Tibial artery (tissue), 4 donors: ENCODE measurements at regions of chr15 and their contacts with region 1.

Region 1: DNA sequence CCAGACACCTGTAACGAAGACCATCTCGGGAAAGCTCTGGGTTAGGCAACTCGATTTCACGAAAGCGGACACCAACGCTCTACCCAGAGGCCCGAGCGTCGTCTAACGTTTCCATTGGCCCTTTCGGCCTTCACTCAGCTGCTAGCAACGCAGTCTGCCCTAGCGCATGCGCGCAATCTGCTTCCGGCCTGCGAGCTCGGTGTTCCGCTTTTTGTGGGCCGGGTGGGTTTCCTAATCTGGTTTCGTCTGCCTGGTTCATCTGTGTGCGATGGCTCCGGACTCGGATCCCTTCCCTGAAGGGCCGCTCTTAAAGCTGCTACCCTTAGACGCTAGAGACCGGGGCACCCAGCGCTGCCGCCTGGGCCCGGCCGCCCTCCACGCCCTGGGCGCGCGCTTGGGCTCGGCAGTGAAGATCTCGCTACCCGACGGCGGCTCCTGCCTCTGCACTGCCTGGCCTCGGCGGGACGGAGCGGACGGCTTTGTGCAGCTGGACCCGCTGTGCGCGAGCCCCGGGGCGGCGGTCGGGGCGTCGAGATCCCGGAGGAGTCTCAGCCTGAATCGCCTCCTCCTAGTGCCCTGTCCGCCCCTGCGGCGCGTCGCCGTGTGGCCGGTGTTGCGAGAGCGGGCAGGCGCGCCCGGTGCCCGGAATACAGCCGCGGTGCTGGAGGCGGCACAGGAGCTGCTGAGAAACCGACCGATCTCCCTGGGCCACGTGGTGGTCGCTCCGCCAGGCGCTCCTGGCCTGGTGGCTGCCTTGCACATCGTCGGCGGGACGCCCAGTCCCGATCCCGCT is 24.0 kb upstream of the GATM start:
- DNase-seq: peak; percentile 93 to 98
- H3K4me3 ChIP-seq: peak overlapping the region; percentile 76 to 88
- H3K27ac ChIP-seq: peak overlapping the region; percentile 90 to 93
- H3K4me1 ChIP-seq: peaks cover 0 to 29% (median 15%) of the 10 kb centered on the region in 4 donors
- H3K27me3 ChIP-seq: no peaks in the 10 kb centered on the region
- CTCF ChIP-seq: peak in 1 of 2 experiments; percentile 18

Region 2: GRCh38 chr15:45166834-45167630 is 235.3 kb before region 1 on chr15:
- intact Hi-C with region 1: loop called (anchors 2 kb)
- DNase-seq: peak; percentile 89 to 92
- H3K4me3 ChIP-seq: peak overlapping the region; percentile 67 to 75
- H3K27ac ChIP-seq: peak overlapping the region; percentile 97
- H3K4me1 ChIP-seq: peaks cover 0 to 26% (median 14%) of the 10 kb centered on the region in 4 donors
- H3K27me3 ChIP-seq: no peaks in the 10 kb centered on the region
- CTCF ChIP-seq: peak; percentile 60 to 70

Region 3: DNA sequence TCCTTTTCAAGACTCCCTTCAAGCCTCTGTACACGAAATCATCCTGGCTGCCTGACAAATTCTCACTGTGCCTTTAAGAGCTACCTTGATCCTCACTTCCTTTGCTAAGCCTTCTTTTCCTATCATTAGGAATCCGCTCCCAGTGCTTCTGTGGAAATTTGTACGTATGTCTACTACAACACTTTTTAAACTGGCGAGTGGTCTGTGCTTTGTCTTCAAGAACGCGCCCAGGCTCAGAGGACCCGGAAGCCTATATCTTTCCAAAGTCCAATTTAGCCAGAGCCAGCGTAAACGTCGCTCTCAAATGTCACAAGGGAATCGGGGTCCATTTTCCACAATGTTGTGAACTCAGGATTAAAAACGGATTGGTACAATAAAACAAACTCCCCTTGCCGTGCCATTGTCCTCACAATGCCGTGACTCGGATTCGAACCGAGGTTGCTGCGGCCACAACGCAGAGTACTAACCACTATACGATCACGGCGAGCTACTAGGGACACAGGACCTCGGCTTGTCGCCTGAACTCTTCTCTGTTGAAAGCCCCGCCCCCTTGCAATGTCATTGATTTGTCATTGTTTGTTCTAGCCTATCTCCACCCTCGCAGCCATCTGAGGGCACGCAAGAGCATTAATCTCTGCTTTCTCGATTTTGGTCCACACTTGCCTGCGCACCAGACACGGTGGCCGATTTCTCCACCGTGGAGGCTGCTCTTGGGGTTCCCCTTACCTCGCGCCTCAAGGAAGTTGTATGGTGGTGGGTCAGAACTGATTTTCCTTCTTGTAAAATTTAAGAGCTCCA is 202.2 kb before region 1 on chr15:
- intact Hi-C with region 1: loop called (anchors 10 kb)
- DNase-seq: peak; percentile 98 to 99
- H3K4me3 ChIP-seq: peak overlapping the region; percentile 55 to 60
- H3K27ac ChIP-seq: peak overlapping the region; percentile 99
- H3K4me1 ChIP-seq: peaks cover 0 to 11% (median 0%) of the 10 kb centered on the region in 4 donors
- H3K27me3 ChIP-seq: no peaks in the 10 kb centered on the region
- CTCF ChIP-seq: no peak

Region 4: GRCh38 chr15:45279024-45279698 is 123.2 kb before region 1 on chr15:
- intact Hi-C with region 1: loop called (anchors 2 kb)
- DNase-seq: peak; percentile 95 to 99
- H3K4me3 ChIP-seq: peak overlapping the region; percentile 55 to 60
- H3K27ac ChIP-seq: peak overlapping the region; percentile 77 to 84
- H3K4me1 ChIP-seq: peaks cover 0 to 13% (median 8%) of the 10 kb centered on the region in 4 donors
- H3K27me3 ChIP-seq: no peaks in the 10 kb centered on the region
- CTCF ChIP-seq: no peak

Region 5: GRCh38 chr15:45307230-45307924 is 95.0 kb before region 1 on chr15:
- intact Hi-C with region 1: loop called (anchors 10 kb)
- DNase-seq: no peak
- H3K4me3 ChIP-seq: peak overlapping the region; percentile 26 to 39
- H3K27ac ChIP-seq: peak overlapping the region in 1 of 2 donors; percentile 44
- H3K4me1 ChIP-seq: peaks cover 0 to 10% (median 5%) of the 10 kb centered on the region in 4 donors
- H3K27me3 ChIP-seq: no peaks in the 10 kb centered on the region
- CTCF ChIP-seq: peak; percentile 60 to 66

Region 6: DNA sequence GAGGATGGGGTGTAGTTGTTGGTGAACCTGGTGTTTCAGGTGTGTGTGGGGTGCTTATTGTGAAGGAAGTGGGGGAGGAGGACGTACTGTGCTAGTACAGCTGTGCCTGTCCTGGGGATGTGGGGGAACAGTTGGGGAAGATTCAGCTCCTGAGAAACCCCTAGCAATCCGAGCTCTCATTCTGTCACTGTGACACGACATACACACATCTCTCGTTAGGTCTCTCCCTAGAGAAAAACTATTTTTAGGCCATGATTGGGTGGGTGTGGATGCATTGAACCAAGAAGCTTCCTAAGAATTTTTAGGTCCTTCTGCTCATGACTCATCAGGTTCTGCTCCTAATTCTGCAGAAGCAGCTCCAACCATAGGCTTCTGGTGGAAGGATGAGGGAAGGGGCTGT is 65.9 kb after region 1 on chr15:
- intact Hi-C with region 1: no loop called
- DNase-seq: no peak
- H3K4me3 ChIP-seq: no peak overlapping the region
- H3K27ac ChIP-seq: no peak overlapping the region
- H3K4me1 ChIP-seq: no peaks in the 10 kb centered on the region
- H3K27me3 ChIP-seq: peaks cover 0 to 20% of the 10 kb centered on the region in 2 donors
- CTCF ChIP-seq: no peak